ENCODE measurements at regions of chr15 and their contacts with region 1.

Region 1: GRCh38 chr15:65832549-65833364 is 36.5 kb upstream of the RAB11A start:
- DNase-seq: peak; percentile 90
- H3K4me3 Mint-ChIP-seq: peak overlapping the region; percentile 50
- H3K27ac Mint-ChIP-seq: peak overlapping the region; percentile 87
- H3K4me1 Mint-ChIP-seq: peaks cover 37% of the 10 kb centered on the region
- H3K27me3 Mint-ChIP-seq: no peaks in the 10 kb centered on the region
- CTCF ChIP-seq: no peak

Region 2: GRCh38 chr15:65638681-65639089 is 194.1 kb before region 1 on chr15:
- CTCF ChIA-PET with region 1: interaction called, 4 read pairs
- intact Hi-C with region 1: loop called (anchors 2 kb)
- DNase-seq: peak; percentile 58
- H3K4me3 Mint-ChIP-seq: no peak overlapping the region
- H3K27ac Mint-ChIP-seq: no peak overlapping the region
- H3K4me1 Mint-ChIP-seq: peaks cover 12% of the 10 kb centered on the region
- H3K27me3 Mint-ChIP-seq: peaks cover 10% of the 10 kb centered on the region
- CTCF ChIP-seq: peak; percentile 65

Region 3: DNA sequence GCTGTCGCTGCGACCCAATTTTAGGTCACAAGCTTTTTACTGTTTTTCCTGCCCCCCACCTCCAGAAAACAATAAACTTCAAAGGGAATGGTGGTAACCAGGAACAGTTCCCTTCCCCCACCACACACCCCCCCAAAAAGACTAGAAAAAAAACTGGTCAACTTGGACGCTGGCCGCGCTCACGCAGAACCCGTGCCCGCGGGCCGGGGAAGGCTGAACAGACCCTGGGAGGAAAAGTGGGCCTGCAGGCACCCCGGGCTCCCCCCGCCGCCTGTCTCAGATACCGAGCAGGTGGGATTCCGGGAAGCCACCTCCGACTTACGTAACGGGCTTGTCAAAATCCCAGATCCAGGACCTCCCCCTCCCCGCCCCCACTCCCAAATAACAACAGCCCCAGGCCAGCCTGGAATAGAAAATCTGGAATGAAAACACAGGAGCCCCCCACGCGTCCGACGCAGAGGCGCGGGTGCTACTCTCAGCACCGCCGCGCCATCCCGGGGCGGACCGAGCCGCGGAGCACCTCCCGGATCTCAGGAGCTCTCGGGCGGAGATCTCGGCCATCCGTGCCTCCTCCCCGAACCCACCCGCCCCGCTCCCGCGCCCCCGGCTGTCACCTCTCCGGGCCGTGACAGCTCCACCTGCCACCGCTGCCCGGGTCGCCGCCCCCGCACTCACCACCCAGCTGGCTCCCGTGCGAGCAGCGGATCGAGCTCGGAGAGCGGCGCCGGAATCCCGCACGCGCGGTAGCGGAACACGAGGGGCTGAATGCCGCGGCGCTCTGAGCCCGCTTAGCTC is 41.2 kb before region 1 on chr15:
- CTCF ChIA-PET with region 1: interaction called, 5 read pairs
- intact Hi-C with region 1: loop called (anchors 2 kb)
- DNase-seq: peak; percentile 49
- H3K4me3 Mint-ChIP-seq: peak overlapping the region; percentile 90
- H3K27ac Mint-ChIP-seq: peak overlapping the region; percentile 95
- H3K4me1 Mint-ChIP-seq: peaks cover 32% of the 10 kb centered on the region
- H3K27me3 Mint-ChIP-seq: no peaks in the 10 kb centered on the region
- CTCF ChIP-seq: no peak

Region 4: GRCh38 chr15:65856821-65857455 is 24.2 kb after region 1 on chr15:
- CTCF ChIA-PET with region 1: interaction called, 11 read pairs
- intact Hi-C with region 1: no loop called
- DNase-seq: peak; percentile 88
- H3K4me3 Mint-ChIP-seq: no peak overlapping the region
- H3K27ac Mint-ChIP-seq: no peak overlapping the region
- H3K4me1 Mint-ChIP-seq: no peaks in the 10 kb centered on the region
- H3K27me3 Mint-ChIP-seq: no peaks in the 10 kb centered on the region
- CTCF ChIP-seq: peak; percentile 82

Region 5: GRCh38 chr15:65869127-65869953 is 36.6 kb after region 1 on chr15 and contains the start of gene RAB11A:
- CTCF ChIA-PET with region 1: interaction called, 15 read pairs
- intact Hi-C with region 1: no loop called
- DNase-seq: peak; percentile 97
- H3K4me3 Mint-ChIP-seq: peak within 1 kb of the TSS; percentile 96
- H3K27ac Mint-ChIP-seq: peak within 1 kb of the TSS; percentile 92
- H3K4me1 Mint-ChIP-seq: peaks cover 8% of the 10 kb centered on the region
- H3K27me3 Mint-ChIP-seq: no peaks in the 10 kb centered on the region
- CTCF ChIP-seq: peak; percentile 19
- total RNA-seq, gene RAB11A: 404 and 407 TPM in 2 replicates

Region 6: GRCh38 chr15:65902378-65902777 is 69.6 kb after region 1 on chr15:
- CTCF ChIA-PET with region 1: interaction called, 4 read pairs
- intact Hi-C with region 1: loop called (anchors 1 kb)
- DNase-seq: peak; percentile 92
- H3K4me3 Mint-ChIP-seq: peak overlapping the region; percentile 39
- H3K27ac Mint-ChIP-seq: peak overlapping the region; percentile 72
- H3K4me1 Mint-ChIP-seq: peaks cover 62% of the 10 kb centered on the region
- H3K27me3 Mint-ChIP-seq: no peaks in the 10 kb centered on the region
- CTCF ChIP-seq: no peak

Measured in Calu3 (cell line).